ENCODE measurements at regions of chr1 and their contacts with region 1.

Region 1: DNA sequence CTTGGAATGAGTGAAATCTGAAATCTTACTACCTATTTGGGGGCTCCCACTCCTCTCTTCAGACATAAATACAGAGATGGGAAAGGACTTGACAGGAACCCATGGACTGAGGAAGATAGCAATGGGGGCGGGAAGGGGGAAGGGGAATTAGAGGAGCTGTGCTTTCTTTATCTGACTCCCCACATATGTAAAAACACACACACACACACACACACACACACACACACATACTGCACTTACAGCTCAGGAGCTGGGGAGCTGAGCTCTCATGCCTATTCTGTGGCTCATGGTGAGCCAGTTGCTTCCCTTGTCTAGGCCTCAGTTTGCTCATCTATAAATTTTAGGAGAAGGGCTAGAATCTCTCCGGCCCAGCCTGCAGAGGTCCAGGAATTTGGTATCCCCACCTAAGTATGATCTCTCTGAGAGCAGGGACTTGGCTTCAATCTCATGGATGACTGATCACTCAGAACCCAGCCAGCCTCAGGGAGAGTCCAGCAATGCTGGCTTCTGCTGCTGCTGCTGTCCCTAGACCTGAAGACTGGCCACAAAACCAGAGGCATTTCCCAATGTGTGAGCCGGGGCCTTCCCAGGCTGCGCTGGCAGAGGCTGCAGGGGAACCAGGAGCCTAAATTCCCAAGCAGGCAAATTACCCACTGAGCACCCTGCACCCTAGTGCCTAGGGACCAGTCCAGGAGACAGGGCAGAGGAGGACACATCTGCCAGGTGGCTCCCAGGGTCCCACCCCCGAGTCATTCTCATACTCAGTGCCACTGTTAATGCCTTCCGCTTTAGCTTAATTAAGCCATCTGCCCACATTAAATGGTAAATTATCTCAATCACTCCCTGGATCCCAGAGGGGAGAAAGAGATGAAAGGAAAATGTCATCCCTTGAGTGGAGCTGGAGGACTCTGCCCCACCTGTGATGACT is 57.5 kb upstream of the RBM15 start:
- DNase-seq: no peak
- H3K4me3 ChIP-seq: no peak overlapping the region
- H3K27ac ChIP-seq: no peak overlapping the region
- H3K4me1 ChIP-seq: no peaks in the 10 kb centered on the region
- H3K27me3 ChIP-seq: no peaks in the 10 kb centered on the region
- CTCF ChIP-seq: no peak
- POLR2A ChIP-seq: no peak

Region 2: GRCh38 chr1:110690709-110691365 is 409.2 kb after region 1 on chr1:
- intact Hi-C with region 1: loop called (anchors 10 kb)
- DNase-seq: no peak
- H3K4me3 ChIP-seq: no peak overlapping the region
- H3K27ac ChIP-seq: no peak overlapping the region
- H3K4me1 ChIP-seq: no peaks in the 10 kb centered on the region
- H3K27me3 ChIP-seq: peaks cover 0 to 14% of the 10 kb centered on the region in 2 donors
- CTCF ChIP-seq: no peak
- POLR2A ChIP-seq: no peak